PC-9 (cell line): ENCODE measurements at regions of chr13 and their contacts with region 1.

Region 1: DNA sequence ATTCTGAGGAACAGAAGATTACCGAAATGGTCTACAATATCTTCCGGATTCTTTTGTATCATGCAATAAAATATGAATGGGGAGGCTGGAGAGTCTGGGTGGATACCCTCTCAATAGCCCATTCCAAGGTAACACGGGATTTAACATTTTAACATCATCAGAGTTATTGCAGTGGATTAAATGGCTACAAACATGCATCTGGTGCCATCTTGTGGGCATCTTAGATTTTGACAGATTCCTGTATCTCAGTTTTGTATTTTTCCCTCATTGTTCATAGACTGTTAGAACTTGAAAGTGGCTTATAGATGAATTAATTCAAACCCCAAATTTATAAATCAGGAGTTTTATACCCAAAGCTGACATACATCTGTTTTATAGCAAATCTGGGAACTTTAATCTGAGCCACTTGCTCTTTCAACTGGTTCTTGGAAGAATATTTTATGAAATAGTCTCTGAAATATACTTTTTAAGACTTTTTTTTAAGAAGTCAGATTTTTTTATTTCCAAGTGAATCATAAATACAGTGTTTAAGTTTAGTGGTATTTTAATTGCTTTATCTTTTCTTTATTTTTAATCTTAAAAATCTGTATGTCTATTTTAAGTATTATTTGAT is 215.2 kb downstream of the NBEA start:
- DNase-seq: peak in 1 of 2 experiments; percentile 15
- H3K4me3 ChIP-seq: no peak overlapping the region
- H3K27ac ChIP-seq: no peak overlapping the region
- H3K4me1 ChIP-seq: no peaks in the 10 kb centered on the region
- H3K27me3 ChIP-seq: no peaks in the 10 kb centered on the region
- CTCF ChIP-seq: peak; percentile 84

Region 2: DNA sequence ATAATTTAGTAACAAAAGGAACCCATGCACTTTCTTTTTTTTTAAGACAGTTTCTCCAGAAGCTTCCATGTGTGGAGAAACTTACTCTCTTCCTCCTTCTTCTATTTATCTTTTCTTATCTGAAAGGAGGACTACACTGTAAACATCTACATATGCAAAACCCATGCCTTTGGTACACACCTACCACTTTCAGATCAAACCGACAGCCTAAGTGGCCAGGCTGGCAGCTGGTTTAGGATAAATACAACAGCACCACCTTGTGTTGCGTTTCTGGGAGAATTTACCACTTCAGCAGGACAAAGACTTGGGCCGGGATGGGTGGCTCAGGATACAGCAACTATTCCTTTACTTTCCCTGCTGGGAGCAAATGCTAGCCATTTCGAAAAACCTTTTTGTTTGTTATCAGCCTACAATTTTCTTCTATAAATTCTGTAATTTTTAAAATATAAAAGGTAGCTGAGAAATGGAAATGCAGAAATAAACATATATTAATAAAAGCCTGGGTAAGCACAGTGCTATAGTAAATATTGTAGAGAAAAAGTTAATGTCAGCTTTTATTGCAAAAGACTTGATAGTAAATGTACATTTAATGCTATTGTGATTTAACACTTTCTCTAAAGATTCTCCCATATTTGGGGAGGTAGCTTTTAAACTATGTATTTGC is 1433.3 kb before region 1 on chr13:
- CTCF ChIA-PET with region 1: no interaction called
- POLR2A ChIA-PET with region 1: no interaction called
- intact Hi-C with region 1: loop called (anchors 2 kb)
- DNase-seq: peak; percentile 47 to 75
- H3K4me3 ChIP-seq: no peak overlapping the region
- H3K27ac ChIP-seq: no peak overlapping the region
- H3K4me1 ChIP-seq: peaks cover 7% of the 10 kb centered on the region; the same call in 1 of the 2 replicates
- H3K27me3 ChIP-seq: no peaks in the 10 kb centered on the region
- CTCF ChIP-seq: peak; percentile 83

Region 3: GRCh38 chr13:33931397-33932311 is 1225.6 kb before region 1 on chr13:
- CTCF ChIA-PET with region 1: no interaction called
- POLR2A ChIA-PET with region 1: no interaction called
- intact Hi-C with region 1: loop called (anchors 2 kb)
- DNase-seq: no peak
- H3K4me3 ChIP-seq: no peak overlapping the region
- H3K27ac ChIP-seq: no peak overlapping the region
- H3K4me1 ChIP-seq: no peaks in the 10 kb centered on the region
- H3K27me3 ChIP-seq: no peaks in the 10 kb centered on the region
- CTCF ChIP-seq: peak; percentile 68

Region 4: GRCh38 chr13:34011541-34012085 is 1145.6 kb before region 1 on chr13:
- CTCF ChIA-PET with region 1: no interaction called
- POLR2A ChIA-PET with region 1: no interaction called
- intact Hi-C with region 1: no loop called
- DNase-seq: no peak
- H3K4me3 ChIP-seq: no peak overlapping the region
- H3K27ac ChIP-seq: no peak overlapping the region
- H3K4me1 ChIP-seq: no peaks in the 10 kb centered on the region
- H3K27me3 ChIP-seq: no peaks in the 10 kb centered on the region
- CTCF ChIP-seq: no peak

Region 5: GRCh38 chr13:34076943-34077703 is 1080.1 kb before region 1 on chr13:
- CTCF ChIA-PET with region 1: no interaction called
- POLR2A ChIA-PET with region 1: no interaction called
- intact Hi-C with region 1: loop called (anchors 5 kb)
- DNase-seq: peak in 1 of 2 experiments; percentile 38
- H3K4me3 ChIP-seq: no peak overlapping the region
- H3K27ac ChIP-seq: no peak overlapping the region
- H3K4me1 ChIP-seq: peaks cover 9% of the 10 kb centered on the region
- H3K27me3 ChIP-seq: no peaks in the 10 kb centered on the region
- CTCF ChIP-seq: peak; percentile 85

Region 6: GRCh38 chr13:34322014-34322742 is 835.1 kb before region 1 on chr13:
- CTCF ChIA-PET with region 1: no interaction called
- POLR2A ChIA-PET with region 1: no interaction called
- intact Hi-C with region 1: no loop called
- DNase-seq: no peak
- H3K4me3 ChIP-seq: no peak overlapping the region
- H3K27ac ChIP-seq: no peak overlapping the region
- H3K4me1 ChIP-seq: no peaks in the 10 kb centered on the region
- H3K27me3 ChIP-seq: no peaks in the 10 kb centered on the region
- CTCF ChIP-seq: no peak

Region 7: GRCh38 chr13:34357435-34358232 is 799.6 kb before region 1 on chr13:
- CTCF ChIA-PET with region 1: no interaction called
- POLR2A ChIA-PET with region 1: no interaction called
- intact Hi-C with region 1: loop called (anchors 5 kb)
- DNase-seq: peak; percentile 25 to 76
- H3K4me3 ChIP-seq: no peak overlapping the region
- H3K27ac ChIP-seq: peak overlapping the region; percentile 87
- H3K4me1 ChIP-seq: peaks cover 47% of the 10 kb centered on the region
- H3K27me3 ChIP-seq: no peaks in the 10 kb centered on the region
- CTCF ChIP-seq: no peak